HCT116 (cell line): ENCODE measurements at regions of chr4 and their contacts with region 1.

Region 1: DNA sequence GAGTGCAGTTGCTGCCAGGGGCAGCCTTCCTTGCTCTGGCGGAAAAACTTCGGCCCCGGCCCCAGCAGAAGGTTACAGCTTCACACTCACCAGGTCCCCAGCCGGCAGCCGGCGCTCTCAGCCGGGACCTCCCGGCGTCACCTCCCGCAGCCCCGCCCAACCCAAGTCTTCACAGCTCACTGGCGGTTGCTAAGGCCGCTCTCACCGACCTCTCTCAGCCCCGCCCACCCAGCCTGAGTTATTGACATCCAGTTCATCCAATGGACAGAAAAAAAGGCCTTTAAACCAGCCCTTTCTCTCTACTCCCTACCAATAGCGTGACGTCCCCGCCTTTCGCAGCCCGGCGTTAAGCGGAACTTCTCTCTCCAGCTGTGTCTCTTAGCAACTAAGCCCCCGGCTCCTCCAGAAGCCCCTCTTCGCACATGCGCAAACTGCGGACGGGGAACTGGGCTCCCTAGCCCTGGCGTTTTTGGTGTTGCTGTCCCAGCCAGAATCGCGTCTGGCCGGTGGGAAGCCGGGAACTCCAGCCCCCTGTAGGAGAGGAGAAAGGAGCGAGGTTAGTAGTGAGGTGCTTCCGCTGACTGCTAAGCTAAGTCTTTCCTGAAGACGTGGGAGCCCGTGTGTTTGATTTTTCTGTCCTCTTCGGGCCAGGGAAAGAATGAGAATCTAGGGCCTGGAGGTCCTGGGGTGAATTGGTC is at the start of gene BBS12:
- DNase-seq: peak; percentile 98
- ATAC-seq: peak; percentile 97
- H3K4me3 ChIP-seq: peak within 1 kb of the TSS; percentile 78 to 83
- H3K27ac ChIP-seq: peak within 1 kb of the TSS; percentile 49
- H3K4me1 ChIP-seq: peaks cover 4 to 13% of the 10 kb centered on the region in 2 experiments; a peak in 2 of 4 replicates
- H3K27me3 ChIP-seq: no peaks in the 10 kb centered on the region
- CTCF ChIP-seq: peak in 1 of 3 experiments; percentile 38; a peak in 2 of 6 replicates
- POLR2A ChIP-seq: no peak
- RAD21 ChIP-seq: peak; percentile 43; the same call in 1 of the 2 replicates
- total RNA-seq, gene BBS12: 2.1 TPM

Region 2: GRCh38 chr4:122914292-122914904 is 181.9 kb after region 1 on chr4:
- CTCF ChIA-PET with region 1: interaction called, 11 read pairs
- POLR2A ChIA-PET with region 1: no interaction called
- RAD21 ChIA-PET with region 1: interaction called in 1 of 2 experiments, 5 read pairs
- intact Hi-C with region 1: no loop called
- DNase-seq: no peak
- ATAC-seq: peak; percentile 82
- H3K4me3 ChIP-seq: no peak overlapping the region
- H3K27ac ChIP-seq: no peak overlapping the region
- H3K4me1 ChIP-seq: peaks cover 4 to 6% of the 10 kb centered on the region in 2 experiments; a peak in 3 of 4 replicates
- H3K27me3 ChIP-seq: no peaks in the 10 kb centered on the region
- CTCF ChIP-seq: peak in 2 of 3 experiments; percentile 46 to 64; a peak in 4 of 6 replicates
- POLR2A ChIP-seq: no peak
- RAD21 ChIP-seq: peak; percentile 77

Region 3: GRCh38 chr4:123986268-123986798 is 1253.9 kb after region 1 on chr4:
- CTCF ChIA-PET with region 1: no interaction called
- POLR2A ChIA-PET with region 1: no interaction called
- RAD21 ChIA-PET with region 1: no interaction called
- intact Hi-C with region 1: no loop called
- DNase-seq: no peak
- ATAC-seq: no peak
- H3K4me3 ChIP-seq: no peak overlapping the region
- H3K27ac ChIP-seq: no peak overlapping the region
- H3K4me1 ChIP-seq: no peaks in the 10 kb centered on the region
- H3K27me3 ChIP-seq: no peaks in the 10 kb centered on the region
- CTCF ChIP-seq: no peak
- POLR2A ChIP-seq: no peak
- RAD21 ChIP-seq: no peak